Endothelial cell of umbilical vein (primary cell): ENCODE measurements at regions of chr17 and their contacts with region 1.

Region 1: DNA sequence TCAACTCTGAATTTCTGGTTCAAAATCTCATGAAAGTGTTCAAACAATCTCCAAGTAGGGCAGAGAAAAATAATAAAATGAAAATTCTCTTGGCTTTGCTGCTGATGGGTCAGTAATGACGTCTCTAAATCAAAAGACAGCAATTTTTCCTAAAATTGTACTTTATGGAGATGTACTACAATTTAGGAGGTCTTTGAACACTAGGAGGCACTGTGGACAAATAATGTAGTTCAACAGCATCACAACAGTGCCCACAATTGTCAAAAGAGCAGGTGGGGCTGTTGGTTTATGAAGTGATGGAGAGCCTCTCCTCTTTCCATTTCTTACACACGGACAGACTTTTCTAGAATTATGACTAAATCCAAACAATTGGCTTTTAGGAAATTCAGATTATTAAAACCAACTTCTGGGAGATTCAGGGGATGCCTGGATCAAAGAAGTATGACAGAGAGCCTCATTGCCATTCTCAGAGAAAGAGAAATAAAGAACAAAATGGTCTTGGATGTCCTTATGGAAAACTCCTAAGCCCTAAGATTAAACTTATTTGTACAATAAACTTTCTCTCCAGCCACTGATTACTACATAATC is 23.8 kb downstream of the EZH1 start:
- DNase-seq: peak; percentile 73
- H3K4me3 ChIP-seq: no peak overlapping the region
- H3K27ac ChIP-seq: no peak overlapping the region
- H3K4me1 ChIP-seq: no peaks in the 10 kb centered on the region
- H3K27me3 ChIP-seq: no peaks in the 10 kb centered on the region
- CTCF ChIP-seq: peak; percentile 47 to 52
- POLR2A ChIP-seq: no peak

Region 2: DNA sequence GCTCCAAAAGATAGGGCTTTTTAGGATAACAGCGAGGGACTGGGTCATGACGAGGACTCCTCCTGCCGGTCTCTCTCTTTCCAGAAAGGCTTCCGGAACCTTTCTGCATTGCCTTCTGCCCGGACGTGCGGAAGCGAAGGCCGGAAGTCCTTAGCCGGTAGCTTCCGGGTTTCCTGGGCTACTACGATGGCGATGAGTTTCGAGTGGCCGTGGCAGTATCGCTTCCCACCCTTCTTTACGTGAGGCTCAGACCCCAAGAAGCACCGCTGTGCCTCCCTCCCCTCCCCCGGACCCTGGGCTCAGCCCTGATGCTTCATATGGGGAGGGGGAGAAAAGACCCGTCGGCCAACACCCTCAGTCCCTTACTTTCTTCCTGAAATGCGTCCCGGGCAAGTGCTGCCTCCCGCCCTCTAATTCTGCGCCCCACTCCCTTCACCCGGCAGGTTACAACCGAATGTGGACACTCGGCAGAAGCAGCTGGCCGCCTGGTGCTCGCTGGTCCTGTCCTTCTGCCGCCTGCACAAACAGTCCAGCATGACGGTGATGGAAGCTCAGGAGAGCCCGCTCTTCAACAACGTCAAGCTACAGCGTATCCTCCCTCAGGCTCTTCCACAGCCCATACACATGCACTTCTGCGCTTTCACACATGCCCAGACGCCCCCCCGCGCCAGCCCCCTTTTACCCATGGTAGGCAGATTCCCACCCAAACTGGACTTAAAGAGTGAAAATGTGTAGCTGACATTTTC is 52.4 kb after region 1 on chr17 and contains the start of gene VPS25:
- CTCF ChIA-PET with region 1: interaction called, 5 read pairs
- POLR2A ChIA-PET with region 1: no interaction called
- dilution Hi-C with region 1: no loop called
- intact Hi-C with region 1: loop called (anchors 2 kb)
- DNase-seq: peak; percentile 61
- H3K4me3 ChIP-seq: peak within 1 kb of the TSS; percentile 15 to 71 (median 68)
- H3K27ac ChIP-seq: peak within 1 kb of the TSS; percentile 73
- H3K4me1 ChIP-seq: peaks cover 26% of the 10 kb centered on the region
- H3K27me3 ChIP-seq: no peaks in the 10 kb centered on the region
- CTCF ChIP-seq: peak in 1 of 2 donors; percentile 3
- POLR2A ChIP-seq: peak; percentile 93
- total RNA-seq, gene VPS25: 45.0 and 47.1 TPM in 2 replicates

Region 3: DNA sequence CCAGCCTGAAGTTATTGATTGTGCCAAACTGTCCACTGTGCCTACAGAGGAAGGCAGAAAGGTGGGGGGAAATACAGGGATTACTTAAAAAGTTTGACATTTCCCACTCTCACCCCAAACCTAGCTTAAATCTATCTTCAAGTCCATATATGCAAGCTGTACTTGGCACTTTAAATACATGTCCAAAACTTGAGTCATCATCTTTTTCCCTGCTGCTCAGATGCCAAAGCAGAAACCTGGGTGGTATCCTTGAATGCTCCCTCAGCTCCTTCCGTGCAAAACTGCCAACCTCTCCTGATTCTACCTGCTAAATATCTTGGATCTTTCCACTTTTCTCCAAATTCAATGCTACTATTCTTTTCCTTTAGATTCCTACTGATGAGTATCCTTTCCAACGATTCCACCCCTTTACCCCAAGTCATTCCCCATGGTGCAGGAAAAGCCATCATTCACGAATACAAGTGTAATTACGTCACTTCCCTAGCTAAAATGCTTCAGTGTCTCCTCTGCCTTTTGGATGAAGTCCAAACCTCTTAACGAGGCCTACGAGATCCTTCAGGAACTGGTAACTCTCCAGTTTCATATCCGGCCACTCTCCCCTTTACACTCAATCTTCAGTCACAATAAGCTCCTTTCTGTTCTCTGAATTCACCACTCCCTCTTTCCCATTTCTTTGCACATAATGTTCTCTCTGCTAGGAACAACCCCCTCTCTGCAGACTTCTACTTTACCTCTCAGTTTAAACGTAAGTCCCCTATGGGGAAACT is 93.7 kb after region 1 on chr17:
- CTCF ChIA-PET with region 1: interaction called, 10 read pairs
- POLR2A ChIA-PET with region 1: no interaction called
- dilution Hi-C with region 1: no loop called
- intact Hi-C with region 1: no loop called
- DNase-seq: peak; percentile 63
- H3K4me3 ChIP-seq: no peak overlapping the region
- H3K27ac ChIP-seq: peak overlapping the region; percentile 41
- H3K4me1 ChIP-seq: peaks cover 20% of the 10 kb centered on the region
- H3K27me3 ChIP-seq: no peaks in the 10 kb centered on the region
- CTCF ChIP-seq: no peak
- POLR2A ChIP-seq: no peak

Region 4: GRCh38 chr17:42937712-42938596 is 216.9 kb after region 1 on chr17:
- CTCF ChIA-PET with region 1: no interaction called
- POLR2A ChIA-PET with region 1: no interaction called
- dilution Hi-C with region 1: no loop called
- intact Hi-C with region 1: loop called (anchors 1 kb)
- DNase-seq: peak; percentile 65
- H3K4me3 ChIP-seq: no peak overlapping the region
- H3K27ac ChIP-seq: no peak overlapping the region
- H3K4me1 ChIP-seq: no peaks in the 10 kb centered on the region
- H3K27me3 ChIP-seq: peaks cover 0 to 2% of the 10 kb centered on the region in 2 experiments
- CTCF ChIP-seq: peak; percentile 62 to 69
- POLR2A ChIP-seq: no peak